Left cardiac atrium (tissue), 4 donors: ENCODE measurements at regions of chr19 and their contacts with region 1.

Region 1: GRCh38 chr19:13861732-13862531 is 15.0 kb upstream of the NANOS3 start:
- DNase-seq: peak; percentile 94
- ATAC-seq: peak; percentile 92 to 94

Region 2: GRCh38 chr19:13597640-13598039 is 264.3 kb before region 1 on chr19:
- intact Hi-C with region 1: loop called (anchors 10 kb)
- DNase-seq: no peak
- ATAC-seq: peak; percentile 82 to 84

Region 3: GRCh38 chr19:13784731-13785452 is 77.0 kb before region 1 on chr19:
- intact Hi-C with region 1: loop called (anchors 2 to 5 kb)
- DNase-seq: peak; percentile 83
- ATAC-seq: peak; percentile 61 to 78

Region 4: DNA sequence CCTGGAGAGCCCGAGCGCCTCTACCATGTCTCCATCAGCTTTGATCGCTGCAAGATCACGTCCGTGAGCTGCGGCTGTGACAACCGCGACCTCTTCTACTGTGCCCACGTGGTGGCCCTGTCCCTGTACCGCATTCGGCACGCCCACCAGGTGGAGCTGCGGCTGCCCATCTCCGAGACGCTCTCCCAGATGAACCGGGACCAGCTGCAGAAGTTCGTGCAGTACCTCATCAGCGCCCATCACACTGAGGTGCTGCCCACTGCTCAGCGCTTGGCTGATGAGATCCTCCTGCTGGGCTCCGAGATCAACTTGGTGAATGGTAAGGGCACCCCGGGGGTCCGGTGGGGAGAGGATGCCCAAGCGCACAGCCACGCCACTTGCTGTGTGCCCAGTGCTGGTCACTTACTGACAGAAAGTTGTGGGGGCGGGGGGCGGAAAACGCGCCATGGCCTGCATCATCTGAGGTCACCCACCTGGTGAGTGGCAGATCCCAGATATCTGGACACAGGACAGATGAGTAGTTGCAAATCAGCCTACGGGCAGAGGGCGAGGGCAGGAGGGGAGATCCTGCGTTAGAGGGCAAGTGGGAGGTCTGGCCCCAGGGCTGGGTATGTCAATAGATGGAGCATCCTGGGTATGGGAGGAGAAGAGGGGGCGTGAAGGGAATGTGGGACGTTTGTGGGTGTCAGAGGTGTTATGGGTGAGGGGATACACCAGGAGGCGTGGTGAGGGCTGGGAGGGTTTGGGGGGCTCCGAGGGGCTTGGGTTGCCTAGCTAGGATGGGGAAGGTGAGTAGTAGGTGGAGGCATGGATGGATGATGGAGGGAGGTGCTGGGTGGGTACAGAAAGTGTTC is 56.9 kb before region 1 on chr19:
- intact Hi-C with region 1: loop called in 1 of 2 experiments (anchors 2 kb)
- DNase-seq: no peak
- ATAC-seq: peak; percentile 41 to 47